Motor neuron (in vitro differentiated cells): ENCODE measurements at regions of chr5 and their contacts with region 1.

Region 1: DNA sequence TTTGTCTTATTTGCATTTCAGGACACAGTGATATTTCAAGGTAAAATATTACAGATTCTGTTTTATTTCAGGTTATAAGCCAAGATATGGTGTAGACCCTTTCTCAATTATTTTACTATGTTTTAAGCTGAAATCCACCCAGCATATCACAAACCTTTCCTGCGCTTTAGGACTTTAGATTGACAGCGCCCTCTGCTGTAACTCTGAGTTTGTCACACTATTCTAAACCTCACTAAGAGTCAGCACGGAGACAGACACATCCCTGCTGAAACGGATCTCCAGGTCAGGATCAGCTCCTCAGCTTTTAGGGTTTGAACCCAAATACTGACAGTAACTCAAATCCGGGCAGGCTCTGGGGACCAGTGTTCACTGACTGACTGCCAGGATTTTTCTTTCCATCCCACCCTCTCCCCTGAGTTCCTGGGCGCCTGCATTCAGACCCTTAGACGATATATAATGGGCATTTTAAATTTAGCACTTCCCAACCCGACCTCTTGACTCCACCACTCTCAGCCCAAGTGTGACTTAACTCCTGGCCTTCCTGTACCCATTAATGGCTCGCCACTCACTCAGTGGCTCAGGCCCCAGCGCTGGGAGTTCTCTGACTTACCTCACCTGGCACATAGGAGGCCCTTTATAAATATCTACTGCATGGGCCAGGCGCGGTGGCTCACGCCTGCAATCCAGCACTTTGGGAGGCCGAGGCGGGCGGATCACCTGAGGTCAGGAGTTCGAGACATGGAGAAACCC is 33.5 kb downstream of the TLX3 start:
- ATAC-seq: peak; percentile 47 to 95 (median 74)
- H3K4me3 ChIP-seq: no peak overlapping the region
- H3K27ac ChIP-seq: no peak overlapping the region
- H3K4me1 ChIP-seq: no peaks in the 10 kb centered on the region

Region 2: GRCh38 chr5:170747851-170748250 is 594.7 kb before region 1 on chr5:
- in situ Hi-C with region 1: loop called in 5 of 9 experiments (anchors 25 kb)
- ATAC-seq: no peak
- H3K4me3 ChIP-seq: no peak overlapping the region
- H3K27ac ChIP-seq: no peak overlapping the region
- H3K4me1 ChIP-seq: peaks cover 20 to 29% of the 10 kb centered on the region in 2 donors

Region 3: DNA sequence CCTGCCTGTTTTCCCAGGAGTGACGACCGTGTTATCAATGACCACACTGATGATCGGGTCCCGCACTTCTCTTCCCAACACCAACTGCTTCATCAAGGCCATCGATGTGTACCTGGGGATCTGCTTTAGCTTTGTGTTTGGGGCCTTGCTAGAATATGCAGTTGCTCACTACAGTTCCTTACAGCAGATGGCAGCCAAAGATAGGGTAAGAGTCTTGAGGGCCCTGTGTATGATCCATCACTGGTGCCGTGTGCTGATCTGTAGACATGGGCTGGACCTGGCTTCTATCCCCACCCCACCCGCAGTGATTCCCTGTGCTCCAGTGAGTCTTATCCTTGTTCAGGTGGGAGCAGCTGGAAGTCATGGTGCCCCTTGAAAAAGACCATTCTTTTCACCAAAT is 533.0 kb before region 1 on chr5:
- in situ Hi-C with region 1: loop called in 1 of 9 experiments (anchors 25 kb)
- ATAC-seq: peak in 6 of 8 experiments; percentile 37 to 83 (median 58)
- H3K4me3 ChIP-seq: no peak overlapping the region
- H3K27ac ChIP-seq: no peak overlapping the region
- H3K4me1 ChIP-seq: no peaks in the 10 kb centered on the region

Region 4: DNA sequence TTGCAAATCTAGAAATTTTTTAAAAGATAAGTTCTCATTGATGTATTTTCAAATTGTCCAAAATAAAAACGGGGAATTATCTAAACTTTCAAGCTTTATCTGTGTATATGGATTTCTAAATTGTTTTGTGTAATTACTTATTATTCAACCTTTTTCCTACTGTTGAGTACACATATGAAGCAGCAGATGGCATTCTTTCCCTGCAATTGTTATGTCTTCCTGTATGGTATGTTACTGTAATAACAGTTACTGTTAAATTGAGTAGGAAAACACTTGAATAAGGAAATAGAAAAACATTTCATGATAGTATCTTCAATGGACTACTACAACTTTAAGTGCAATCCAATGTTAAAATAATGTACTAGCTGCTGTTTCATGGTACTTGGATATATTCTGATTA is 355.9 kb before region 1 on chr5:
- in situ Hi-C with region 1: loop called in 1 of 9 experiments (anchors 25 kb)
- ATAC-seq: peak in 1 of 8 experiments; percentile 46
- H3K4me3 ChIP-seq: no peak overlapping the region
- H3K27ac ChIP-seq: no peak overlapping the region
- H3K4me1 ChIP-seq: no peaks in the 10 kb centered on the region

Region 5: GRCh38 chr5:171175746-171176145 is 166.8 kb before region 1 on chr5:
- in situ Hi-C with region 1: loop called in 1 of 9 experiments (anchors 25 kb)
- ATAC-seq: no peak
- H3K4me3 ChIP-seq: no peak overlapping the region
- H3K27ac ChIP-seq: no peak overlapping the region
- H3K4me1 ChIP-seq: peaks cover 0 to 4% of the 10 kb centered on the region in 2 donors